ENCODE measurements at regions of chr3 and their contacts with region 1.

Region 1: DNA sequence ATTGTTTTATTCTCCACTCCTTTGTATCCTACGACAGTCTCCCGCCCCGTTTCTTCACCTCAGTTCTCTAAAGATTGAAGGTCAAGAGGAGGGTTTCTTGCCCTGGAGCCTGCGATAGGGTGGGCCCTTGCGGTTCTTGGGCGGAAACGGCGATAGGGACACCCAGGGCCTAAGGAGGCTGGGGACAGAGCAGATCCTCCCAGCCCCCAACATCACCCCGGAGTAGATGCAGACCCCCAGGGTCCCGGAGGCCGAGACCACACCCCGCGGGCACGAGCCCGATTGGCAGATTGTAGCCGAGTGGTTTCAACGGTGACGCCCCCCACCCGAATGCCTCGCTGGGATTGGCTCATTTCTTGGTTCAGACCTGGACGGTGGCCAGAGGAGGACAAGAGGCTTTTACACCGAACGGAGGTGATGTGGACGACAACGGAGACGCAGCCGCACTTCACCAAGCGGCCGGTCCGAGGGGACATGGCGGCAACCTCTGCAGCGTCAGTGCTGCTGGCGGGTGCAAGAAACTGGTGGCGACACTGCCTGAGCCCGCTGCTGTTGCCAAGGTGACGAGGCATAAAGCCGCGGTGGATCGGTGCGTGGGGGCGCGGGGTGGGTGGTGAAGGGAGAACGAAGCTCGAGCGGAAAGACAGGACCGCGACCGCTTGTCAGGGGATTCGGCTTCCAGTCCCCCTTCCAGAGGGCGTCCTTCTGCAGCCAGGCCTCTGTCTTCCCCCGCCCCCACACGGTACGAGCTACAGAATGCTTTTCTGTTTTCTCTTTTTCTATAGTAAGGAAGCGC is 19.0 kb upstream of the MCF2L2 start:
- DNase-seq: peak; percentile 69 to 93 (median 88)
- H3K4me3 ChIP-seq: peak overlapping the region; percentile 48 to 93 (median 80)
- H3K27ac ChIP-seq: peak overlapping the region; percentile 57 to 97 (median 90)
- H3K27me3 ChIP-seq: no peaks in the 10 kb centered on the region
- CTCF ChIP-seq: peak in 35 of 56 donors; percentile 7 to 56 (median 30)

Region 2: GRCh38 chr3:183392186-183393034 is 55.0 kb before region 1 on chr3:
- intact Hi-C with region 1: loop called (anchors 5 to 10 kb)
- DNase-seq: no peak
- H3K4me3 ChIP-seq: no peak overlapping the region
- H3K27ac ChIP-seq: no peak overlapping the region
- H3K27me3 ChIP-seq: no peaks in the 10 kb centered on the region
- CTCF ChIP-seq: no peak

Region 3: GRCh38 chr3:183427876-183428446 is 19.4 kb before region 1 on chr3:
- intact Hi-C with region 1: loop called (anchors 2 kb)
- DNase-seq: peak; percentile 64 to 90 (median 78)
- H3K4me3 ChIP-seq: peak overlapping the region; percentile 51 to 98 (median 87)
- H3K27ac ChIP-seq: peak overlapping the region in 56 of 59 donors; percentile 12 to 91 (median 80)
- H3K27me3 ChIP-seq: no peaks in the 10 kb centered on the region
- CTCF ChIP-seq: peak in 3 of 56 donors; percentile 11 to 42 (median 17)